ENCODE measurements at regions of chr7 and their contacts with region 1.

Region 1: GRCh38 chr7:106153891-106154449 is 41.9 kb upstream of the SYPL1 start:
- DNase-seq: peak; percentile 64
- ATAC-seq: peak; percentile 89
- H3K4me3 Mint-ChIP-seq: peak overlapping the region; percentile 72
- H3K27ac Mint-ChIP-seq: peak overlapping the region; percentile 19
- H3K4me1 Mint-ChIP-seq: peaks cover 52% of the 10 kb centered on the region
- H3K27me3 Mint-ChIP-seq: no peaks in the 10 kb centered on the region
- CTCF ChIP-seq: peak; percentile 66

Region 2: GRCh38 chr7:105759670-105760550 is 394.1 kb before region 1 on chr7:
- CTCF ChIA-PET with region 1: interaction called, 10 read pairs
- POLR2A ChIA-PET with region 1: no interaction called
- intact Hi-C with region 1: loop called (anchors 2 kb)
- DNase-seq: no peak
- ATAC-seq: no peak
- H3K4me3 Mint-ChIP-seq: no peak overlapping the region
- H3K27ac Mint-ChIP-seq: no peak overlapping the region
- H3K4me1 Mint-ChIP-seq: peaks cover 1% of the 10 kb centered on the region
- H3K27me3 Mint-ChIP-seq: no peaks in the 10 kb centered on the region
- CTCF ChIP-seq: peak; percentile 67

Region 3: GRCh38 chr7:106056513-106057203 is 97.3 kb before region 1 on chr7:
- CTCF ChIA-PET with region 1: interaction called, 247 read pairs
- POLR2A ChIA-PET with region 1: interaction called, 84 read pairs
- intact Hi-C with region 1: loop called (anchors 1 kb)
- DNase-seq: peak; percentile 55
- ATAC-seq: peak; percentile 53
- H3K4me3 Mint-ChIP-seq: peak overlapping the region; percentile 71
- H3K27ac Mint-ChIP-seq: peak overlapping the region; percentile 99
- H3K4me1 Mint-ChIP-seq: peaks cover 65% of the 10 kb centered on the region
- H3K27me3 Mint-ChIP-seq: no peaks in the 10 kb centered on the region
- CTCF ChIP-seq: peak; percentile 65

Region 4: GRCh38 chr7:106094800-106095199 is 59.2 kb before region 1 on chr7:
- CTCF ChIA-PET with region 1: interaction called, 17 read pairs
- POLR2A ChIA-PET with region 1: interaction called, 3 read pairs
- intact Hi-C with region 1: loop called (anchors 1 kb)
- DNase-seq: no peak
- ATAC-seq: peak; percentile 64
- H3K4me3 Mint-ChIP-seq: no peak overlapping the region
- H3K27ac Mint-ChIP-seq: peak overlapping the region; percentile 72
- H3K4me1 Mint-ChIP-seq: peaks cover 75% of the 10 kb centered on the region
- H3K27me3 Mint-ChIP-seq: no peaks in the 10 kb centered on the region
- CTCF ChIP-seq: no peak

Region 5: DNA sequence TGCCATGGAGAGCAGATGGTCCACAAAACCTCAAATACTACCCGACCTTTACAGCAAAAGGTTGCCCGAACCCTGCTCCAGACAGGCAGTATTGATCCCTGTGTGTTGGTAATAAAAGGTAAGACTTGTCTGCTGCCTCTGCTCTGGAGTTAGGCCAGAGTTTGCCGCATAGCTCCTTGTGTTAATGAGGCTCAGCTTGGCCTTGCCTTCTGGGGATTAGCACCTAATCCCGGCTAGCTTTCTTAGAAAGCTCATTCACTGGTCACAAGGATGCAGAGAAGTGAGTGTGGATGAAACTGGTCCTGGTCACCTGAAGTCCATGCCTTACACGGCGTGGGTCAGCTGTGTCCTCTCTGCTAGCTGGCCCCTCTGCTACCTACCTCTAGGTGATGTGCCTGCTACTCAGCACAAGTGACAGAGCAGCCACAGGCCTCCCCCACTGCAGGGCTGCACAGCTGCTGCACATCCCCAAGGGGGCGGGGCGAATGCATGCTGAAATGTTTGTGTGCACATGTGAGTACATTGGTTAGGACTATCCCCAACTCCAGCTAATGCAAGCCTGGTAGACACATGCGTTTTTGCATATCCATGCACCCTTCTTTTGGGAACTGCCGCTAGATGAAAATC is 10.1 kb before region 1 on chr7:
- CTCF ChIA-PET with region 1: interaction called, 11 read pairs
- POLR2A ChIA-PET with region 1: interaction called, 3 read pairs
- intact Hi-C with region 1: no loop called
- DNase-seq: no peak
- ATAC-seq: no peak
- H3K4me3 Mint-ChIP-seq: no peak overlapping the region
- H3K27ac Mint-ChIP-seq: no peak overlapping the region
- H3K4me1 Mint-ChIP-seq: peaks cover 6% of the 10 kb centered on the region
- H3K27me3 Mint-ChIP-seq: no peaks in the 10 kb centered on the region
- CTCF ChIP-seq: no peak

Region 6: DNA sequence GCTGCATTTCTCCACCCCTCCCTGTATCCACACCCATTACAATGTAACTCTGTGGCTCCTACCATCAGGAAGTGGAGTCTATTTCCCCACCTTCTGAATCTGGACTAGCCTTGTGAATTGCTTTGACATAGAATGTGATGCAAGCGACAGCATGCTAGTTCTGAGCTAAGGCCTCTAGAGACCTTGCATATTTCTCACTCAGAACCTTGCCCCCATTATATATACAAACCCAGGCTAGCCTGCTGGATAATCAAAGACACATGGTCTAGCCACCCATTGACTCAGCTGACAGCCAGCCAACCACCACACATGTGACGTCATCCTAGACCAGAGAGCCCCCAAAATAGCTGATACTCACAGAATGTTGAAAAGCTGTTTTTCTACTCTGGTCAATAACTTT is 429.1 kb after region 1 on chr7:
- CTCF ChIA-PET with region 1: no interaction called
- POLR2A ChIA-PET with region 1: no interaction called
- intact Hi-C with region 1: no loop called
- DNase-seq: no peak
- ATAC-seq: no peak
- H3K4me3 Mint-ChIP-seq: no peak overlapping the region
- H3K27ac Mint-ChIP-seq: no peak overlapping the region
- H3K4me1 Mint-ChIP-seq: no peaks in the 10 kb centered on the region
- H3K27me3 Mint-ChIP-seq: no peaks in the 10 kb centered on the region
- CTCF ChIP-seq: no peak

Measured in activated B cell treated with CpG ODN at 0.5 μM for 24 hours (primary cell).